ENCODE measurements at regions of chr3 and their contacts with region 1.

Region 1: DNA sequence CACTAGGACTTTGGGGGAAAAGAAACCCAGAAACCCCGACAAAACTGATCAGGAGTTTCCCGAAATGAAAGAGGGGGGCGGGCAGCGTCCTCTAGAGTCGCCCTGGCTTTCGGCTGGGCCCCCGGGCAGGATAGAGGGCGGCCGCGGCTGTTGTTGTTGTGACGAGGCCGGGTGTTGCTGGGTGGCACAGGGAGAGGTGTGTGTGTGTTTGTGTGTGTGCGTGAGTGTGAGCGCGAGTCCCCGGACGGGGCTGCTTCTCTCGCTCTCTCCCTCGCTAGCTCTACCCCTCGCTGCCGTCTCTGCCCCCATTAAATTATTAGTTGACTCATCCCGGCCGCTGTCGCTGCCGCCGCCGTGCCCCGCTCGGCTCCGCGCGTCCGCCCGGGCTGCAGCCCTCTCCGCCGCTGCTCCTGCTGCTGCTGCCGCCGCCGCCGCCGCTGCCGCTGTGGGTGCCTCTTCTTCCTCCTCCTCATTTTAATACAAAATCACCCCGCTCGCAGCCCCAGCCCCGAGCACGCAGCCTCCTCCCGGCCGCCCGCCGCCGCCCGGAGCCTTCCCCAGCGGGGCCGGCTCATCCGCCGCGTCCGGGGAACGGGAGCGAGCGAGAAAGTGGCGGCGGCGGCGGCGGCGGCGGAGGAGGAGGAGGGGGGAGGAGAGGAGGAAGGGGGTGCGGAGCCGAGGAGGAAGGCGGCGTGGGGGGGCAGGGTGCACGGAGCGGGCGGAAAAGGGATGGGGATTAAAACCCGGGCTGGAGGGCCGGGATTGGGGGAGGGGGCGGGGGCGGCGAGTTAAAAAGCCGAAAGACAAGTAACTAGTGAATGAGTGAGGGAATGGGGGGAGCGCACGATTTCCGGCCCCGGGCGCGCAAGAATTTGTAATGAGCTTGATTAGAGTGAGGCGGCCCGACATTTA is at the start of gene SATB1:
- DNase-seq: peak; percentile 48
- ATAC-seq: peak; percentile 57
- H3K4me3 ChIP-seq: peak within 1 kb of the TSS; percentile 85
- H3K27ac ChIP-seq: no peak within 1 kb of the TSS
- H3K4me1 ChIP-seq: peaks cover 13% of the 10 kb centered on the region; the same call in 1 of the 2 replicates
- H3K27me3 ChIP-seq: no peaks in the 10 kb centered on the region
- CTCF ChIP-seq: no peak
- total RNA-seq, gene SATB1: 15.6 and 28.6 TPM in 2 replicates

Region 2: GRCh38 chr3:18237251-18238005 is 187.6 kb before region 1 on chr3:
- CTCF ChIA-PET with region 1: no interaction called
- POLR2A ChIA-PET with region 1: no interaction called
- intact Hi-C with region 1: loop called (anchors 5 kb)
- DNase-seq: peak; percentile 91
- ATAC-seq: peak; percentile 91
- H3K4me3 ChIP-seq: peak overlapping the region; percentile 25; the same call in 1 of the 2 replicates
- H3K27ac ChIP-seq: peak overlapping the region; percentile 89
- H3K4me1 ChIP-seq: peaks cover 53% of the 10 kb centered on the region
- H3K27me3 ChIP-seq: no peaks in the 10 kb centered on the region
- CTCF ChIP-seq: no peak

Region 3: GRCh38 chr3:18445401-18446148 is 20.6 kb after region 1 on chr3:
- CTCF ChIA-PET with region 1: no interaction called
- POLR2A ChIA-PET with region 1: no interaction called
- intact Hi-C with region 1: loop called (anchors 1 kb)
- DNase-seq: no peak
- ATAC-seq: peak; percentile 9
- H3K4me3 ChIP-seq: peak overlapping the region; percentile 74
- H3K27ac ChIP-seq: no peak overlapping the region
- H3K4me1 ChIP-seq: peaks cover 22% of the 10 kb centered on the region
- H3K27me3 ChIP-seq: peaks cover 28% of the 10 kb centered on the region
- CTCF ChIP-seq: no peak

Region 4: DNA sequence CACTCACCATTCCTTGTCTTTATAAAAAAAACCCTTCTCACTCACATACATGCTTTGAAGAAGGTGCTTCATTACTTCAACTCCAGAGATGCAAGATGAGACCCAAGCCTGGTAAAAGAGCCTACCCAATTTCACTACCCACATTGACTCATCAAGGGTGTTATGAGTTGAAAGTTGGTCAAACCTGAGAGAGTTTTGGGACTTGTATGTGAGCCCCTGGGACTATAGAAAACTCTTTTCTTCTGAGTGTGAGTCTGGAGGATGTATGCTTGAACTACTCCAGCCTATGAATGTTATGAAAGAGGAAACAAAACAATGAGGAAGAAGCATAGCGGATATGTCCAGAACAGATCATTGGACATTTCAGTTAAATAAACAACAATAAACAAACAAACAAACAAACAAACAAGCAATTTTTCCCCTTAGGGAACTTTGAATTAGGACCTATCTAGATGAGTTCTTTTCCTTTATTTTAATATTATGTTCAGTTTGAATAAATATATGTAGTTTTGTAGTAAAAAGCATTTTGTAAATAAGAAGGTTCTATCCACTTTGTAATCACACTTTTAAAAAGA is 106.8 kb after region 1 on chr3:
- CTCF ChIA-PET with region 1: no interaction called
- POLR2A ChIA-PET with region 1: no interaction called
- intact Hi-C with region 1: no loop called
- DNase-seq: no peak
- ATAC-seq: no peak
- H3K4me3 ChIP-seq: no peak overlapping the region
- H3K27ac ChIP-seq: no peak overlapping the region
- H3K4me1 ChIP-seq: no peaks in the 10 kb centered on the region
- H3K27me3 ChIP-seq: no peaks in the 10 kb centered on the region
- CTCF ChIP-seq: no peak

Region 5: GRCh38 chr3:18544146-18544545 is 119.2 kb after region 1 on chr3:
- CTCF ChIA-PET with region 1: no interaction called
- POLR2A ChIA-PET with region 1: no interaction called
- intact Hi-C with region 1: loop called (anchors 2 kb)
- DNase-seq: no peak
- ATAC-seq: no peak
- H3K4me3 ChIP-seq: no peak overlapping the region
- H3K27ac ChIP-seq: no peak overlapping the region
- H3K4me1 ChIP-seq: peaks cover 15% of the 10 kb centered on the region; the same call in 1 of the 2 replicates
- H3K27me3 ChIP-seq: no peaks in the 10 kb centered on the region
- CTCF ChIP-seq: no peak

Region 6: GRCh38 chr3:18758047-18758704 is 333.2 kb after region 1 on chr3:
- CTCF ChIA-PET with region 1: no interaction called
- POLR2A ChIA-PET with region 1: no interaction called
- intact Hi-C with region 1: loop called (anchors 1 kb)
- DNase-seq: peak; percentile 99
- ATAC-seq: peak; percentile 95
- H3K4me3 ChIP-seq: no peak overlapping the region
- H3K27ac ChIP-seq: peak overlapping the region; percentile 84
- H3K4me1 ChIP-seq: peaks cover 14% of the 10 kb centered on the region
- H3K27me3 ChIP-seq: no peaks in the 10 kb centered on the region
- CTCF ChIP-seq: peak; percentile 92

Measured in PC-3 (cell line).